Dorsolateral prefrontal cortex (tissue), 120 donors: ENCODE measurements at regions of chr11 and their contacts with region 1.

Region 1: GRCh38 chr11:75280227-75280701 is 39.7 kb downstream of the TPBGL start:
- DNase-seq: peak; percentile 76 to 90 (median 86)
- H3K4me3 ChIP-seq: no peak overlapping the region
- H3K27ac ChIP-seq: peak overlapping the region in 57 of 59 donors; percentile 28 to 87 (median 76)
- H3K27me3 ChIP-seq: no peaks in the 10 kb centered on the region
- CTCF ChIP-seq: peak; percentile 97 to 100 (median 99)

Region 2: DNA sequence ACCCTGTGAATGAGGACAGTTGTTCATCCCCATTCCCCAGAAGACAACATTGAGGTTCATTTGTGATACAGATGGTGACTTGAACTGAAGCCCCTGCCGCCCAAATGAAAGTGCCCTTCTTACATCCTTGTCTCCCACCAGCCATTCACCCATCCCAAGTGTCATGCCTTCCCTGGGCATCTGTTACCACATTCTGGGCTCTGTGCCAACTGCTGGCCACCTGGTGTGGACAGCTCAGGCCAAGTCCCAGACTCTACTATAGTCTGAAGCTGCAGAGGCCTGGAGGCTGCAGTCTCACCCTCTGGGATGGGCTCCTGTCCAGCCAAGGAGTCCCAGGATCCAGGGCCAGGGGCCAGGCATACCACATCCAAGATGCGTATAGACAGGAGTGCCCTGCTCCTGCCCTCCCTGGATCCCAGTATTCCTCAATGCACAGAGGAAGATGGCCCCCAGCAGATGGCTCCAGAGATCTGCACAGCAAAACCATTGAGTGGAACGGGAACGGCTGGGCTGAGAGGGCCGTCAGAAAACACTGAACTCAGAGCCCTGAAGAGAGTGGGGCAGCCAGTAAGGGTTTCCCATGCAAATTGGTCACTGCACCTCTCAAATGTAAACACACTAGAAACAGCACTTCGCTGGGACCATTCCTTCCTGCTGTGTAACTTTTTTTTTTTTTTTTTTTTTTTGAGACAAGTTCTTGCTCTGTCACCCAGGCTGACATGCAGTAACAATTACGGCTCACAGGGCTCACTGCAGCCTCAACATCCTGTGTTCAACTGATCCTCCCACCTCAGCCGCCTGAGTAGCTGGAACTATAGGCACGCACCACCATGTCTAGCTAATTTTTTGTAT is 48.4 kb after region 1 on chr11:
- intact Hi-C with region 1: loop called (anchors 1 to 10 kb)
- DNase-seq: peak; percentile 65 to 89 (median 83)
- H3K4me3 ChIP-seq: peak overlapping the region in 1 of 59 donors; percentile 6
- H3K27ac ChIP-seq: peak overlapping the region; percentile 14 to 97 (median 74)
- H3K27me3 ChIP-seq: no peaks in the 10 kb centered on the region
- CTCF ChIP-seq: peak in 55 of 56 donors; percentile 49 to 91 (median 73)

Region 3: DNA sequence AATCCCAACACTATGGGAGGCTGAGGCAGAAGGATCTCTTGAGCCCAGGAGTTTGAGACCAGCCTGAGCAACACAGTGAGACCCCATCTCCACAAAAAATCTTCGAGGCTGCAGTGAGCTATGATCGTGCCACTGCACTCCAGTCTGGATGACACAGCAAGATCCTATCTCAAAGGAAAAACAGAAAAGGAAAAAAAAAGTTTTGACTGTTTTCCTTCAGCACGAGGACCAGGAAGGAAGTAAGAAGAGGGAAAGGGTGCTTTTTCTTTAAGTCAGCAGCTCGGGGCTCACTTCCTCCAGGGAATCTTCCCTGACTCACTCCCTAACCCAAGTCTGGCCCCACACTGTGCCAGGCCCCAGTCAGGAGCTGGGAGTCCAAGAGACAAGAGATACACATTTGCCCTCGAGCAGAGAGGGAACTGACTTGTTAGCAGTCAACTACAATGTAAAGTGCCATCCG is 57.0 kb after region 1 on chr11:
- intact Hi-C with region 1: loop called in 1 of 2 experiments (anchors 10 kb)
- DNase-seq: no peak
- H3K4me3 ChIP-seq: no peak overlapping the region
- H3K27ac ChIP-seq: peak overlapping the region in 44 of 59 donors; percentile 1 to 96 (median 56)
- H3K27me3 ChIP-seq: no peaks in the 10 kb centered on the region
- CTCF ChIP-seq: no peak

Region 4: GRCh38 chr11:75532200-75533048 is 252.2 kb after region 1 on chr11:
- intact Hi-C with region 1: loop called (anchors 5 kb)
- DNase-seq: peak in 8 of 10 donors; percentile 54 to 83 (median 76)
- H3K4me3 ChIP-seq: no peak overlapping the region
- H3K27ac ChIP-seq: no peak overlapping the region
- H3K27me3 ChIP-seq: no peaks in the 10 kb centered on the region
- CTCF ChIP-seq: peak; percentile 88 to 100 (median 96)